Posterior vena cava (tissue), 2 donors: ENCODE measurements at regions of chr13 and their contacts with region 1.

Region 1: DNA sequence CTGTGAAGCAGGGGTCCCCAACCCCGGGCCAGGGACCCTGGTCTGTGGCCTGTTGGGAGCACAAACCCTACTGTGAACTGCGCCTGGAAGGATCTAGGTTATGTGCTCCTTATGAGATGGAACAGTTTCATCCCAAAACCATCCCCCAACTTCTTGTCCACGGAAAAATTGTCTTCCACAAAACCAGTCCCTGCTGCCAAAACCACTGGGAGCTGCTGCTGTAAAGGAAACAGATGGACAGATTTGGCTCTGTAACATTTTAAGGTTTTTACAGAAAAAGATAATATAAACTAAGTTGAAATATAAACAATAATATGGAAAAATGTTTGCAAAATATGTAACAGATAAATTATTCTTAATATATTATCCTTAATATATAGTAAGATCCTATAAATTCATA is 73.7 kb downstream of the COG6 start:
- DNase-seq: no peak

Region 2: DNA sequence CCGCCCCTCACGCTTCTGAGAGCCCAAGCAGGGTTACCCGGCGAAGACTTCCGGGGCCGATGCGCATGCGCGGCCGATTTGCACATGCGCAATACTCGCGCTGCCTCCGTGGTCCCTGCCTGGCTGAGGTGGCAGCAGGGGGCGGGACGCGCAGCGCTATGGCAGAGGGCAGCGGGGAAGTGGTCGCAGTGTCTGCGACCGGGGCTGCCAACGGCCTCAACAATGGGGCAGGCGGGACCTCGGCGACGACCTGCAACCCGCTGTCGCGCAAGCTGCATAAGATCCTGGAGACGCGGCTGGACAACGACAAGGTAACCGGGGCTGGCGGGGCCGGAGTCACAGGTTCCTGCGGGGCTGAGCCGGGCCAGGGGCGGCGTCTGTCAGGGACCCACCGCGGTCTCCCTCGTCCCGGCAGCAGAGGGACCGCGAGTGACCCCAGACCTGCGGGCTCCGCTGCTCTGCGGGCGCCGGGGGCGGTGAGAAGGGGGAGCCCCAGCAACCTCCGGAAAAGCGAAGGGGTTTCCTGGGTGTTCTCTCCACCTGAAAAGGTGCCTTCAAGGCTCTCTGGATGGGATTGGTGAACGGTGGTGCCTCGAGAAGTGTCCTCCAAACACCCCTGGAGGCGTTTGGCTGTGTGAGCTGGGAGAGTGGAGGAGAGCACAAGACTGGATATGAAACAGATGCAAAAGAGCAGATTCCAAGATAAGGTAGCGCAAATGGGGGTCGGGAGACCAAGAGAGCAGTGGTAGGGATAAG is 73.4 kb before region 1 on chr13 and contains the start of gene COG6:
- intact Hi-C with region 1: loop called in 1 of 2 experiments (anchors 2 kb)
- DNase-seq: peak; percentile 97
- total RNA-seq, gene COG6: 47.7 to 54.4 TPM